ENCODE measurements at regions of chr5 and their contacts with region 1.

Region 1: GRCh38 chr5:178153573-178154343 is at the start of gene NHP2:
- DNase-seq: peak; percentile 97
- ATAC-seq: peak; percentile 100
- H3K4me3 ChIP-seq: peak within 1 kb of the TSS; percentile 69 to 85 (median 75)
- H3K4me3 Mint-ChIP-seq: peak within 1 kb of the TSS; percentile 97
- H3K27ac ChIP-seq: peak within 1 kb of the TSS in 1 of 2 donors; percentile 70
- H3K27ac Mint-ChIP-seq: peak within 1 kb of the TSS; percentile 86
- H3K4me1 ChIP-seq: peaks cover 12 to 20% of the 10 kb centered on the region in 2 donors
- H3K4me1 Mint-ChIP-seq: peaks cover 30% of the 10 kb centered on the region
- H3K27me3 ChIP-seq: no peaks in the 10 kb centered on the region
- H3K27me3 Mint-ChIP-seq: no peaks in the 10 kb centered on the region
- CTCF ChIP-seq: no peak
- total RNA-seq, gene NHP2: 62.1 and 66.0 TPM in 2 replicates

Region 2: GRCh38 chr5:177592010-177592834 is 561.5 kb before region 1 on chr5 and contains the start of gene TMED9:
- CTCF ChIA-PET with region 1: no interaction called
- POLR2A ChIA-PET with region 1: no interaction called
- intact Hi-C with region 1: loop called (anchors 1 kb)
- DNase-seq: peak; percentile 90
- ATAC-seq: peak; percentile 98
- H3K4me3 ChIP-seq: peak within 1 kb of the TSS; percentile 63 to 91 (median 88)
- H3K4me3 Mint-ChIP-seq: peak within 1 kb of the TSS; percentile 99
- H3K27ac ChIP-seq: peak within 1 kb of the TSS; percentile 62 to 82
- H3K27ac Mint-ChIP-seq: peak within 1 kb of the TSS; percentile 97
- H3K4me1 ChIP-seq: peaks cover 12 to 18% of the 10 kb centered on the region in 2 donors
- H3K4me1 Mint-ChIP-seq: peaks cover 19% of the 10 kb centered on the region
- H3K27me3 ChIP-seq: no peaks in the 10 kb centered on the region
- H3K27me3 Mint-ChIP-seq: peaks cover 5% of the 10 kb centered on the region
- CTCF ChIP-seq: no peak
- total RNA-seq, gene TMED9: 63.1 and 67.6 TPM in 2 replicates

Region 3: GRCh38 chr5:178113199-178113787 is 40.5 kb before region 1 on chr5 and contains the start of gene N4BP3:
- CTCF ChIA-PET with region 1: interaction called, 5 read pairs
- POLR2A ChIA-PET with region 1: interaction called, 8 read pairs
- intact Hi-C with region 1: loop called (anchors 1 kb)
- DNase-seq: peak; percentile 91
- ATAC-seq: peak; percentile 63
- H3K4me3 ChIP-seq: peak within 1 kb of the TSS; percentile 26 to 85 (median 74)
- H3K4me3 Mint-ChIP-seq: peak within 1 kb of the TSS; percentile 94
- H3K27ac ChIP-seq: peak within 1 kb of the TSS; percentile 86 to 89
- H3K27ac Mint-ChIP-seq: peak within 1 kb of the TSS; percentile 93
- H3K4me1 ChIP-seq: peaks cover 55 to 62% of the 10 kb centered on the region in 2 donors
- H3K4me1 Mint-ChIP-seq: peaks cover 66% of the 10 kb centered on the region
- H3K27me3 ChIP-seq: no peaks in the 10 kb centered on the region
- H3K27me3 Mint-ChIP-seq: no peaks in the 10 kb centered on the region
- CTCF ChIP-seq: peak; percentile 25
- total RNA-seq, gene N4BP3: 47.2 and 48.7 TPM in 2 replicates

Region 4: GRCh38 chr5:178120868-178121357 is 32.8 kb before region 1 on chr5:
- CTCF ChIA-PET with region 1: interaction called, 50 read pairs
- POLR2A ChIA-PET with region 1: interaction called, 8 read pairs
- intact Hi-C with region 1: no loop called
- DNase-seq: peak; percentile 88
- ATAC-seq: peak; percentile 50
- H3K4me3 ChIP-seq: peak overlapping the region in 4 of 5 experiments; percentile 18 to 34 (median 32)
- H3K4me3 Mint-ChIP-seq: peak overlapping the region; percentile 82
- H3K27ac ChIP-seq: peak overlapping the region in 1 of 2 donors; percentile 26
- H3K27ac Mint-ChIP-seq: peak overlapping the region; percentile 88
- H3K4me1 ChIP-seq: peaks cover 65 to 68% of the 10 kb centered on the region in 2 donors
- H3K4me1 Mint-ChIP-seq: peaks cover 68% of the 10 kb centered on the region
- H3K27me3 ChIP-seq: no peaks in the 10 kb centered on the region
- H3K27me3 Mint-ChIP-seq: no peaks in the 10 kb centered on the region
- CTCF ChIP-seq: peak; percentile 80

Region 5: GRCh38 chr5:178130604-178131485 is 22.9 kb before region 1 on chr5 and contains the start of gene RMND5B:
- CTCF ChIA-PET with region 1: interaction called, 3 read pairs
- POLR2A ChIA-PET with region 1: interaction called, 4 read pairs
- intact Hi-C with region 1: loop called (anchors 1 kb)
- DNase-seq: peak; percentile 92
- ATAC-seq: peak; percentile 87
- H3K4me3 ChIP-seq: peak within 1 kb of the TSS; percentile 17 to 81 (median 78)
- H3K4me3 Mint-ChIP-seq: peak within 1 kb of the TSS; percentile 89
- H3K27ac ChIP-seq: peak within 1 kb of the TSS; percentile 60 to 83
- H3K27ac Mint-ChIP-seq: peak within 1 kb of the TSS; percentile 88
- H3K4me1 ChIP-seq: peaks cover 6 to 16% of the 10 kb centered on the region in 2 donors
- H3K4me1 Mint-ChIP-seq: peaks cover 22% of the 10 kb centered on the region
- H3K27me3 ChIP-seq: no peaks in the 10 kb centered on the region
- H3K27me3 Mint-ChIP-seq: no peaks in the 10 kb centered on the region
- CTCF ChIP-seq: no peak
- total RNA-seq, gene RMND5B: 52.7 and 53.9 TPM in 2 replicates

Region 6: GRCh38 chr5:178204182-178204894 is 50.6 kb after region 1 on chr5 and contains the start of gene HNRNPAB:
- CTCF ChIA-PET with region 1: interaction called, 5 read pairs
- POLR2A ChIA-PET with region 1: interaction called, 4 read pairs
- intact Hi-C with region 1: loop called (anchors 1 kb)
- DNase-seq: peak; percentile 99
- ATAC-seq: peak; percentile 80
- H3K4me3 ChIP-seq: peak within 1 kb of the TSS; percentile 60 to 94 (median 80)
- H3K4me3 Mint-ChIP-seq: peak within 1 kb of the TSS; percentile 99
- H3K27ac ChIP-seq: peak within 1 kb of the TSS; percentile 55 to 79
- H3K27ac Mint-ChIP-seq: peak within 1 kb of the TSS; percentile 100
- H3K4me1 ChIP-seq: peaks cover 12 to 18% of the 10 kb centered on the region in 2 donors
- H3K4me1 Mint-ChIP-seq: peaks cover 30% of the 10 kb centered on the region
- H3K27me3 ChIP-seq: no peaks in the 10 kb centered on the region
- H3K27me3 Mint-ChIP-seq: no peaks in the 10 kb centered on the region
- CTCF ChIP-seq: no peak
- total RNA-seq, gene HNRNPAB: 70.6 and 75.1 TPM in 2 replicates

Region 7: GRCh38 chr5:178232124-178232919 is 78.6 kb after region 1 on chr5 and contains the start of gene PHYKPL:
- CTCF ChIA-PET with region 1: interaction called, 3 read pairs
- POLR2A ChIA-PET with region 1: no interaction called
- intact Hi-C with region 1: loop called (anchors 1 kb)
- DNase-seq: peak; percentile 83
- ATAC-seq: peak; percentile 71
- H3K4me3 ChIP-seq: peak within 1 kb of the TSS; percentile 49 to 85 (median 71)
- H3K4me3 Mint-ChIP-seq: peak within 1 kb of the TSS; percentile 87
- H3K27ac ChIP-seq: peak within 1 kb of the TSS; percentile 77 to 88
- H3K27ac Mint-ChIP-seq: peak within 1 kb of the TSS; percentile 93
- H3K4me1 ChIP-seq: peaks cover 21 to 46% of the 10 kb centered on the region in 2 donors
- H3K4me1 Mint-ChIP-seq: peaks cover 50% of the 10 kb centered on the region
- H3K27me3 ChIP-seq: no peaks in the 10 kb centered on the region
- H3K27me3 Mint-ChIP-seq: no peaks in the 10 kb centered on the region
- CTCF ChIP-seq: no peak
- total RNA-seq, gene PHYKPL: 263 and 275 TPM in 2 replicates

Region 8: DNA sequence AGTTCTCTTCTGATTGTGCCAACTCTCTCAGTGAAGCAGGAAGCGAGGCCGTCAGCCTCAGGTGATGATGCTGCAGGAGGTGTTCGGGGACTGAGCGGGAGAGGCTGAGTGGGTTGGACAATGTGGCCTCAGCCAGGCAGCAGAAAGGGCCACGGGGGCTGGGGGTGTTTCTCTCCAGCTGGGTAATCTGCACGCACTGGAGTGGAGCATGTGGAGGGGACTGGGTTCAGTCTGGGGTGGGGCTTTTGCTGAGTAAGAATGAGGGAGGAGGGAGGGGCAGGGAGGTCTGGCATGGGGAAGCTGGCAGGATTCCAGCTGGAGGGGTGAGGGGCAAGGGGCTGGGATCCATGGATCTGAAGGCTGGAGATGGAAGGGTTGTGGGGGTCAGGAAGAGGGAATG is 139.6 kb after region 1 on chr5:
- CTCF ChIA-PET with region 1: no interaction called
- POLR2A ChIA-PET with region 1: no interaction called
- intact Hi-C with region 1: no loop called
- DNase-seq: no peak
- ATAC-seq: no peak
- H3K4me3 ChIP-seq: no peak overlapping the region
- H3K4me3 Mint-ChIP-seq: no peak overlapping the region
- H3K27ac ChIP-seq: no peak overlapping the region
- H3K27ac Mint-ChIP-seq: no peak overlapping the region
- H3K4me1 ChIP-seq: no peaks in the 10 kb centered on the region
- H3K4me1 Mint-ChIP-seq: no peaks in the 10 kb centered on the region
- H3K27me3 ChIP-seq: no peaks in the 10 kb centered on the region
- H3K27me3 Mint-ChIP-seq: peaks cover 31% of the 10 kb centered on the region
- CTCF ChIP-seq: no peak

Measured in B cell (primary cell).